ENCODE measurements at regions of chr22 and their contacts with region 1.

Region 1: DNA sequence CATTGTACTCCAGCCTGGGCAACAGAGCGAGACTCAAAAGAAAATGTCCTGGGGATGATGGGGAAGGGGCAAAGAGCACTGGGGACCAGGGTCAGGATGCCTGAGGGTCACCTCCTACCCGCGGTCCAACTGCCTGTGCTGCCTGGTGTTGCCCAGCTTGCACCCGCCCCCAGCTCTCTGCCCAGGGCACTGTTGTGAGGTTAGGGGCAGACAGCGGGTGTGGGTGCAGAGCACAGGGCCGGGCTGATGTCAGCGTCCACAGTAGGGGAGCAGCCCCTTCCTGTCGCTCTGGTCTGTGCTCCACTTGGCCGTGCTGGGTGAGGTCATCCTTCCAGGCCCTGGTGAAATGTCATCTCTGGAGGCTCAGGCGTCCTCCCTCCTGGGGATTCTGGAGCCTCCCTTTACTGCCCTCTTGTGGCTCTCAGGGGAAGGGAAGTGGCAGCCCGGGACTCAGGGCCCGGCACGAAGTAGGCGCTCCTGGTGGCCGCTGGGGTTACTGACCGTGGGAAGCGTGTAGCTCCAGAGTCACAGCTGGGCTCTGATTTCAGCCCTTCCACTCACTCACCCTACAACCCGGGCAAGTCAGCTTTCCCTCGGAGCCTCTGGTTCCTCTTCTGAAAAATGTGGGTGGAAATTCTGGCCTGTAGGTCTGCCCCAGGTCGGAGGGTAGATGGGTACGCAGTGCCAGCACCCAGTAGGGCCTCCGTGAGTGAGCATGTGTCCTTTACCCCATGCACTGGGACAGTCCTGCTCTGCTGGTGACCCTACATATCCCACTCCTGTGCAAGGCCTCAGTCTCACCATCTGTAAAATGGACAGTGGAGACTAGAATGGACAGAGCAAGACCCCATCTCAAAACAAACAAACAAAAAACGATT is 17.3 kb upstream of the PRR5 start:
- DNase-seq: peak; percentile 89
- H3K4me3 Mint-ChIP-seq: no peak overlapping the region
- H3K27ac Mint-ChIP-seq: peak overlapping the region; percentile 93
- H3K4me1 Mint-ChIP-seq: peaks cover 64% of the 10 kb centered on the region
- H3K27me3 Mint-ChIP-seq: no peaks in the 10 kb centered on the region

Region 2: GRCh38 chr22:44664149-44664548 is 20.6 kb before region 1 on chr22:
- CTCF ChIA-PET with region 1: interaction called, 41 read pairs
- POLR2A ChIA-PET with region 1: no interaction called
- DNase-seq: peak; percentile 74
- H3K4me3 Mint-ChIP-seq: peak overlapping the region; percentile 25
- H3K27ac Mint-ChIP-seq: peak overlapping the region; percentile 86
- H3K4me1 Mint-ChIP-seq: peaks cover 53% of the 10 kb centered on the region
- H3K27me3 Mint-ChIP-seq: peaks cover 2% of the 10 kb centered on the region

Region 3: GRCh38 chr22:44669561-44669976 is 15.2 kb before region 1 on chr22:
- CTCF ChIA-PET with region 1: interaction called, 41 read pairs
- POLR2A ChIA-PET with region 1: interaction called, 3 read pairs
- DNase-seq: no peak
- H3K4me3 Mint-ChIP-seq: peak overlapping the region; percentile 76
- H3K27ac Mint-ChIP-seq: peak overlapping the region; percentile 83
- H3K4me1 Mint-ChIP-seq: peaks cover 72% of the 10 kb centered on the region
- H3K27me3 Mint-ChIP-seq: no peaks in the 10 kb centered on the region

Region 4: DNA sequence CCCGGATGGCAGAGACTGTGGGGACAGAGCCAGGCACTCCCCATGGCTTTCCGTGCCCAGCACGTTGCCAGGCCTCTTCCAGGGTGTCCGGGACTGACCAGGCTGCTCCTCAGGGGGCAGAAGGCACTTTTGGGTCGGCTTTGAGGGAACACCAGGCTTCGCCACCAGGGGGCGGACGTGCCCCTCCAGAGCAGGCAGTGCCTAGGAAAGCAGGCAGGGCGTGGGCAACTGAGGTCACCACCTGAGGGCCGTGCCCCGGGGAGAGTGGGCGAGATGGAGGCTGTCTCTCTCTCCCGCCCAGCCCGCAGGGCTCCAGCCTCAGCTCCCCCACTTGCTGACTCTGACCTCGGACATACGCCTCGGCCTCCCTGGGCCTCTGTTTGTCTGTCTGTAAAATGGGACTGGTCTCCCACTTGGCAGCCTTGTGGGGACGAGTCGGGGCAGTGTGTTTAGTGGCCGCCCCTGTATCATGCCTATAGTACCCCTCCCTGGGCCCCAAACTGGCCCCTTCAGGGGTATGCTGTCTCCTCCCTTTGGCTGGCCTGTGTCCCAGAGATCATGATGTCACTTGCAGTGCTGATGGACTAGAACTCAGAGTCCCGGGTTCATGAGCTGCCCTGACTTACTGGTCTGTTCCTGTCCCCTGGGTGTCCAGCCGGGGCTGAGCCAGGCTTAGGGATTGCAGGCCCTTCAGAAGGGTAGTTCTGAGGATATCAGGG is 12.8 kb after region 1 on chr22:
- CTCF ChIA-PET with region 1: interaction called, 10 read pairs
- POLR2A ChIA-PET with region 1: no interaction called
- DNase-seq: peak; percentile 84
- H3K4me3 Mint-ChIP-seq: no peak overlapping the region
- H3K27ac Mint-ChIP-seq: no peak overlapping the region
- H3K4me1 Mint-ChIP-seq: peaks cover 8% of the 10 kb centered on the region
- H3K27me3 Mint-ChIP-seq: no peaks in the 10 kb centered on the region

Region 5: GRCh38 chr22:44703255-44703875 is 18.6 kb after region 1 on chr22:
- CTCF ChIA-PET with region 1: interaction called, 13 read pairs
- POLR2A ChIA-PET with region 1: no interaction called
- DNase-seq: no peak
- H3K4me3 Mint-ChIP-seq: peak overlapping the region; percentile 59
- H3K27ac Mint-ChIP-seq: no peak overlapping the region
- H3K4me1 Mint-ChIP-seq: peaks cover 12% of the 10 kb centered on the region
- H3K27me3 Mint-ChIP-seq: no peaks in the 10 kb centered on the region

Region 6: DNA sequence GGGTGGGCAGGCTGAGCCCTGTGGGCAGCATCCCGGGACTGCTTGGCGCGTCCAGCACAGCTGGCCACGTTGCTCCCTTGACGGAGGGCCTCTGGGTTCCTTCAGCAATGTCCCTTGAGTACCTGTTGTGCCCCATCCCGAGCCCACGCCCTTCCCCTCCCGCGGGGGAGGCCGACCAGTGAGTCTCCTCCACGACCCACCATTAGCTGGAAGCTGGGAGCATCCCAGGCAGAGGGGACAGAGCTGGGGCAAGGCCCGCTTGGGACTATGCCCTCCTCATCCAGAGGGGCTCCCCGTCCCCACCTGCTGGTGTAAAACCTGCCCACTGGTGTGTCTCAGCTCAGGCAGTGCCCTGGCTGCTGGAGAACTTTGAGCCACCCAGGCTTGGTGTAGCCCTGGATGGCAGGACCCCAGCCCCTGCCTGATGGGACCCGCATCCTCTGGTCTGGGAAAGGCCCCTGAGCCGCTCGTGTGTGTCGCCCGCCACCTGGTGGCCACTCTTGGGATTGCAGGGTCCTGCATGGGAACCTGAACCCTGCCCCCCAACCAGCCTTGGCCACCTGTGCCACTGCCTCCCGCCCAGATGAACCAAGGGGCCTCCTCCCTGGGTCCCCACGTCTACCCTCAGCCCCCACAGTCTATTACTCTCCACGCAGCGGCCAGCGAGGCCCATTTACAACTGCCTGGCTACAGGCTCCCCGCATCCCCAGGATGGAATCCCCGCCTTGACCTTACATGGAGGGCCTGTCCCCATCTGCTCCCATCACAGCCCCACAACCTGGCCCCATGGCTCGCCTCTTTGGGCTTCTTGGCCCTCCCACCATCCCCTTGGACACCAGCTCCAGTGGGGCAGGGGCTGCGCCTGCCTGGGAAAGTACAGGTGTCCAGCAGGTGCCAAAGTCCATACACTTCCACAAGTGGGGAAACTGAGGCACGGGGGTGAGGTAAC is 51.1 kb after region 1 on chr22:
- CTCF ChIA-PET with region 1: interaction called, 17 read pairs
- POLR2A ChIA-PET with region 1: no interaction called
- DNase-seq: peak; percentile 81
- H3K4me3 Mint-ChIP-seq: no peak overlapping the region
- H3K27ac Mint-ChIP-seq: peak overlapping the region; percentile 36
- H3K4me1 Mint-ChIP-seq: no peaks in the 10 kb centered on the region
- H3K27me3 Mint-ChIP-seq: no peaks in the 10 kb centered on the region

Region 7: GRCh38 chr22:44793506-44794172 is 108.9 kb after region 1 on chr22:
- CTCF ChIA-PET with region 1: no interaction called
- POLR2A ChIA-PET with region 1: no interaction called
- DNase-seq: no peak
- H3K4me3 Mint-ChIP-seq: no peak overlapping the region
- H3K27ac Mint-ChIP-seq: no peak overlapping the region
- H3K4me1 Mint-ChIP-seq: no peaks in the 10 kb centered on the region
- H3K27me3 Mint-ChIP-seq: no peaks in the 10 kb centered on the region

Region 8: DNA sequence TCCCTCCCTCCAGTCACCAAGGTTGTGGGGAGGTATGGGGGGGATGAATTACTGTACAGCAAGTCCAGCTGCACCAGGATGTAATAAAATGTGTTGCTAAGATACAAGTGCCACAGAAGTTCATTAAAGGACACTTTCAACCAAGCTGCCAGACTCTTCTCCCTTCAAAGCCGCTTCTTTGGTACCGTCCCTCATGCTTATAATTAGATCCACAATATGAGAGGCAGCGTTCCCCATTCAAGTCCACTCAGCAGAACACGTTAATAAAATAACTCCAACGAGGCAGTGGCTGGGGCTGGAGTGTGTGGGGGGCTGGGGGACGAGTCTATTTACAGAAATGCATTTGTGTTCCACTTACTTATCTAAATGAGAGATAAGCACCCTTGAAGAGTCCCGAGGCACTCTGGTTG is 310.4 kb after region 1 on chr22:
- CTCF ChIA-PET with region 1: no interaction called
- POLR2A ChIA-PET with region 1: no interaction called
- DNase-seq: no peak
- H3K4me3 Mint-ChIP-seq: no peak overlapping the region
- H3K27ac Mint-ChIP-seq: no peak overlapping the region
- H3K4me1 Mint-ChIP-seq: peaks cover 2% of the 10 kb centered on the region
- H3K27me3 Mint-ChIP-seq: no peaks in the 10 kb centered on the region

Measured in activated CD4-positive, alpha-beta T cell treated with anti-CD3 and anti-CD28 coated beads, Interleukin-2, amount 10 ng/mL, durations not matched to agents 7 days and 5 days (primary cell).